ENCODE measurements at regions of chr3 and their contacts with region 1.

Region 1: GRCh38 chr3:192825657-192826200 is 91.9 kb downstream of the MB21D2 start:
- ATAC-seq: peak; percentile 23 to 85 (median 62)
- H3K4me3 ChIP-seq: no peak overlapping the region
- H3K27ac ChIP-seq: no peak overlapping the region
- H3K4me1 ChIP-seq: peaks cover 13 to 14% of the 10 kb centered on the region in 2 donors

Region 2: GRCh38 chr3:192901435-192901834 is 75.7 kb after region 1 on chr3:
- in situ Hi-C with region 1: loop called in 1 of 9 experiments (anchors 10 kb)
- ATAC-seq: no peak
- H3K4me3 ChIP-seq: no peak overlapping the region
- H3K27ac ChIP-seq: no peak overlapping the region
- H3K4me1 ChIP-seq: peaks cover 6% of the 10 kb centered on the region in 2 donors